ENCODE measurements at regions of chr3 and their contacts with region 1.

Region 1: DNA sequence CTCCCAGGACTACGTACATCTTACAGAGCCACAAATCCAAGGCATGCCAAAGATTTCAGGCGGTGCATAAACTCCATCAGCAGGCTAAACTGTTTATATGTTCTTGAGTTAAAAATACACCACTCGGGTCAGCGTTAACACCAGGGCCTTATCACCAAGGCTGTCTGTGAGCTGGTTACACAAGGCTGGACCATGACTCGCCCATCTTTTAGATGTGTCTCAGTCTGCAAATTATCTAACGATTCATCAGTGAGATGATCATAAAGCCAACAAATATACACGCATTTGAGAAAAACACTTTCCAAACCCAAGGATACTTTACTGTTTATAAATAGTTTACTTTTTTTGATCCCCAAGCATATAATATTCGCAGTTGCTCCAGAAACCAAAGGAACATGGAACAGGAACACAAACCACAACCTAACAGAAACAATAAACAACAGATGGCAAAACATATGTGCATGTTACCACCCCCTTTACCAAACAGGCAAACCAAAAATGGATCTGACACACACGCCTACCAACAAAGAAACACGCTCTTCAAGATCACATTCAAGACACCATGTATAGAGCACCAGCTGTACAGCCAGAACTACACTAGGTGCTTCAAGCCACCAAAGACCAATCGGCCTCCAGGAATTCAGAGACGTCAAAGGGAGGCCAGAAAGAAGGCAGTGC is 15.4 kb downstream of the LRIG1 start:
- DNase-seq: peak; percentile 81
- H3K4me3 ChIP-seq: no peak overlapping the region
- H3K27ac ChIP-seq: peak overlapping the region; percentile 85 to 95 (median 91)
- H3K4me1 ChIP-seq: peaks cover 0 to 100% (median 97%) of the 10 kb centered on the region in 4 donors
- H3K27me3 ChIP-seq: no peaks in the 10 kb centered on the region
- CTCF ChIP-seq: no peak
- EP300 ChIP-seq: peak in 2 of 4 donors; percentile 12 to 70
- POLR2A ChIP-seq: no peak

Region 2: DNA sequence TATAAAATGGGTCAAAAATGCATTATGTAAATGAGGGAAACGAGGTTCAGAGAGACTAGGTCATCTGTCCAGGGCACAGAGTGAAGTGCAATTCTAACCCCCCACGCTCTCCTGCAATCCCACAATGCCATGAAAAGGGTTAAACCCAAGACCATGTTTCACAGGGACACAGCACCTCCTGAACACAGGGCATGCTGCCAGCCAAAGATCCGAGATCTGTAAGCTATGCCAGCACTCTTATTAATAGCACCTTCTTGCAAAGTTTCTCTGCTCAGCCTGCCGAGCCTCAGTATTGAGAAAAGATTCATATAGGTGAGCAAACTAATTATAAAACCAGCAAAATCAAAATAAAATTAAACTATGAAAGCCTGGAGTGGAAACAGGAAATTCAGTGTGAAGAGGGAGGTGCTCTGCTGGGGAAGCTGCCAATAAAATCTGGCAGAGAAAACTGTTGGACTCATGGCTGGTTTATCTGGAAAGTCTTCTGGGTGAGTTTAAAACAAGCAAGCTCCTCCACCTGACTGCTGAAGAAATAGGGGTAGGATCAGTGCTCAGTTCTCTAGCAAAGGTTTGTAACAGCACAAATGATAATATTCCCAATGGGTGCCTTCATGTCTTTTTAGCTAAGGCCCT is 34.9 kb before region 1 on chr3:
- intact Hi-C with region 1: loop called (anchors 5 kb)
- DNase-seq: peak; percentile 90
- H3K4me3 ChIP-seq: peak overlapping the region in 2 of 4 donors; percentile 12 to 27
- H3K27ac ChIP-seq: peak overlapping the region; percentile 79 to 95 (median 85)
- H3K4me1 ChIP-seq: peaks cover 0 to 100% (median 93%) of the 10 kb centered on the region in 4 donors
- H3K27me3 ChIP-seq: no peaks in the 10 kb centered on the region
- CTCF ChIP-seq: no peak
- EP300 ChIP-seq: no peak
- POLR2A ChIP-seq: no peak

Region 3: DNA sequence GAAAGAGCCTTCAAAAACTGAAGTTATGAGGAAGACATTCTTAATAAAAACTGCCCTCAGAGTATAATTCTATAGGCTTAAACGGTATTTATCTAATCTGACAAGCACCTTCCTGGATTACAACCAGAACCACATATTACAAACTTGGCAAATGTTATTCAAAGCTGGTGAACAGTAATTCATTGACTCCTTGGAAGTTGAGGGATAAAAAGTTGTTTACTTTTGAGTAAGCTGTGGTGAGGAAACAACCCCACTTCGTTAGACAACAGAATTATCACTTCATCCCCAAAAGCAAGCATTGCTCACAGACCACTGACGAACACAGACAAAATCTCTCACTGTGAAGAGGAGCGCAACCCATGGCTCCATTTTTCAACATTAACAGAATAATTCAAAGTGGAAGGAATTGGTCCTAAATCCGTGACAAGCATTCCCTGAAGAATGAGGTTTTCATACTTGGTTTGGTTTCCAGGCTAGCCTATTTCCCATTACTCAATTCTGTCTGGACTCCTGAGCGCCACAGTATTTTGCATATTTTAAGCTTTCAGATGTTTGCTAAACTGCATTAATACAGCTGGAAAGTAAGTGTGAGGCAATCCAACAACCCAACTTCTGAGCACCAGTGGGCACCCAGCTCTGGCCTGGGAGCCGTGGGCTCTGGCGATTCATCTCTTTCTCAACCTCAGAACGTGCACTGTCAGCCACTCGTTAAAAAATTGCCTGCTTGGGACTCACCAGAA is 17.3 kb before region 1 on chr3:
- intact Hi-C with region 1: no loop called
- DNase-seq: no peak
- H3K4me3 ChIP-seq: no peak overlapping the region
- H3K27ac ChIP-seq: peak overlapping the region in 3 of 4 donors; percentile 10 to 95 (median 90)
- H3K4me1 ChIP-seq: peaks cover 0 to 96% (median 89%) of the 10 kb centered on the region in 4 donors
- H3K27me3 ChIP-seq: no peaks in the 10 kb centered on the region
- CTCF ChIP-seq: no peak
- EP300 ChIP-seq: no peak
- POLR2A ChIP-seq: no peak

Measured in sigmoid colon (tissue), 7 donors.